Left lung (tissue), 14 donors: ENCODE measurements at regions of chr5 and their contacts with region 1.

Region 1: DNA sequence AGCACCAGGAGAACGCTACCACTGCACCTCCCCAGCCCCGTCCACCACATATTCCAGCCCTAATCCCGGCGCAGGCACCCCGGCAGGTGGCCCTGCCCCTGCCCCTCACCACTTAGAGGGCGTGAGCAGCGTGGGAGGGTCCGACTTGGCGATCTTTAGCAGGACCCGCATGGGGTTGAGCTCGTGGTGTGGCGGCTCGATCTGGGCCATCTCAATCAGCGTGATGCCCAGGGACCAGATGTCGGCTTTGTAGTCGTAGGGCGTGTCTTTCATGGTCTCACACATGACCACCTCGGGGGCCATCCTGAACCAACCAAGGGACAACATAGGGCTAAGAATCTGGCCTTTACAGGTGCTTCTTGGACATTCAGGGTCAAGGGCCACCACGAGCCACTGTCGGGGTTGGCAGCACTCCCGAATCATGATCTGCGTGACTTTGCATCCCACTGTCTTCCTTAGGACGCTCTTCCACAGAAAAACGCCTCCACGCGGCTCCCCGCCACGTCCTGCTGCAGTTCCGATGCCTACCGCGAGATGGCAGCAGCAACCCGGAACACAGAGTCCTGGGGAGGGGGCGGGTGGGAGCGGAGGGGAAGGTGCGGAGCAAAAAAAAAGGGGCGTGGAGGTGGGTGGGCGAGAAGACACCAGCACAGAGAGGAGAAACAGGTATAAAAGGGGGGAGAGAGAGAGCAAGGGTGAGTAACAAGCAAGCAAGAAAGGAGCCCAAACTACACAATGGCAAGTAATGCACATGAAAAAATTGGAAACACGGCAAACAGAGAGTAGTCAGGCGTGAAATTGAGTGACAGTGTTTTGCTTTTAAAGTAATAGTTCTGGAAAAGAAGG is 81.3 kb downstream of the STK10 start:
- DNase-seq: peak in 2 of 4 donors; percentile 72 to 87
- ATAC-seq: peak; percentile 59
- H3K4me3 ChIP-seq: no peak overlapping the region
- H3K27ac ChIP-seq: peak overlapping the region in 1 of 2 donors; percentile 13
- H3K4me1 ChIP-seq: peaks cover 7 to 76% of the 10 kb centered on the region in 2 donors
- H3K27me3 ChIP-seq: no peaks in the 10 kb centered on the region
- CTCF ChIP-seq: peak; percentile 93 to 95

Region 2: DNA sequence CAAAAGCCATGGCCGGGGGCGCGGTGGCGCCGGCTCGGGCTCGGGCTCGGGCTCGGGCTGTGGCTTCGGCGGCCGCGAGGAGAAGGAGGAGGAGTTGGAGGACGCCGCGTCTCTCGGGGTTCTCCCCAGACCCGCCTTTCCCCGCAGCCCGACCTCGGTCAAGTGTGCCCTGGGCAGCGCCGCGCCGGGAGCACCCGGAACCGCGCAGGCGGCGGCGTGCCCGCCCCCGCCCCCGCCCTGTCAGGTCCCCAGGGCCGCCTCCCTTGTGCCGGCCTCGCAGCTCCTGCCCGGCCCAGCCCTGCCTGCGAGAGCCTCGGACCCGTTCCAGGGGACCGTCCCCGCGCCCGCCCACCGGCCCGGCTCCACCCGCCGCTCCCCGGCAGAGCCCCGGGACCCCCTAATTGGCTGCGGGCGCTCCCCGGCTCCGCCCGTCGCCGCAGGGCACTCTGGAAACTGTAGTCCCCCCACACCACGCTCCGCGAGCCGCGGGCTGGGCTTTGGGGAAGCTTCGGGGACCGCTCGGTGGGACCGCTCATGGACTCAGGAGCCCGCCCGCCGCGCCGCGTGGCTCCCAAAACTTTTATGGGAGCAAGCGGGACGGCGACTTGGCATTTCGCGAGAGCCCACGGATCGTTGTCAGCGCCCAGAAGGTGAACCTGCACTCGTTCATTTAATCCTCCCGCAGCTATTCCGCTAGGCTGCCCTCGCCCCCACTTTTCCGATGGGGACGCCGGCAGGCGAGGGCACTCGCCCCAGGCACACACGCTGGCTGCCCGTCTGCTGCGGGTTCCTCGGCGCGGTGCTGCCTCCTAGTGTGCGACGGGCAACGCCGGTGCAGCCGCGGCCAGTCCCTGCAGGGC is 81.5 kb after region 1 on chr5 and contains the start of gene STK10:
- intact Hi-C with region 1: loop called (anchors 5 to 10 kb)
- DNase-seq: peak; percentile 87 to 99 (median 94)
- ATAC-seq: peak; percentile 92
- H3K4me3 ChIP-seq: peak within 1 kb of the TSS; percentile 87 to 96
- H3K27ac ChIP-seq: peak within 1 kb of the TSS; percentile 84 to 99
- H3K4me1 ChIP-seq: peaks cover 11 to 41% of the 10 kb centered on the region in 2 donors
- H3K27me3 ChIP-seq: no peaks in the 10 kb centered on the region
- CTCF ChIP-seq: peak; percentile 87 to 92
- polyA plus RNA-seq, gene STK10: 18.6 to 22.5 (median 21.4) TPM

Region 3: GRCh38 chr5:172293054-172293744 is 186.5 kb after region 1 on chr5:
- intact Hi-C with region 1: loop called in 1 of 2 experiments (anchors 10 kb)
- DNase-seq: peak in 3 of 4 donors; percentile 67 to 85 (median 74)
- ATAC-seq: peak; percentile 100
- H3K4me3 ChIP-seq: no peak overlapping the region
- H3K27ac ChIP-seq: no peak overlapping the region
- H3K4me1 ChIP-seq: peaks cover 2 to 8% of the 10 kb centered on the region in 2 donors
- H3K27me3 ChIP-seq: no peaks in the 10 kb centered on the region
- CTCF ChIP-seq: peak; percentile 73 to 88

Region 4: DNA sequence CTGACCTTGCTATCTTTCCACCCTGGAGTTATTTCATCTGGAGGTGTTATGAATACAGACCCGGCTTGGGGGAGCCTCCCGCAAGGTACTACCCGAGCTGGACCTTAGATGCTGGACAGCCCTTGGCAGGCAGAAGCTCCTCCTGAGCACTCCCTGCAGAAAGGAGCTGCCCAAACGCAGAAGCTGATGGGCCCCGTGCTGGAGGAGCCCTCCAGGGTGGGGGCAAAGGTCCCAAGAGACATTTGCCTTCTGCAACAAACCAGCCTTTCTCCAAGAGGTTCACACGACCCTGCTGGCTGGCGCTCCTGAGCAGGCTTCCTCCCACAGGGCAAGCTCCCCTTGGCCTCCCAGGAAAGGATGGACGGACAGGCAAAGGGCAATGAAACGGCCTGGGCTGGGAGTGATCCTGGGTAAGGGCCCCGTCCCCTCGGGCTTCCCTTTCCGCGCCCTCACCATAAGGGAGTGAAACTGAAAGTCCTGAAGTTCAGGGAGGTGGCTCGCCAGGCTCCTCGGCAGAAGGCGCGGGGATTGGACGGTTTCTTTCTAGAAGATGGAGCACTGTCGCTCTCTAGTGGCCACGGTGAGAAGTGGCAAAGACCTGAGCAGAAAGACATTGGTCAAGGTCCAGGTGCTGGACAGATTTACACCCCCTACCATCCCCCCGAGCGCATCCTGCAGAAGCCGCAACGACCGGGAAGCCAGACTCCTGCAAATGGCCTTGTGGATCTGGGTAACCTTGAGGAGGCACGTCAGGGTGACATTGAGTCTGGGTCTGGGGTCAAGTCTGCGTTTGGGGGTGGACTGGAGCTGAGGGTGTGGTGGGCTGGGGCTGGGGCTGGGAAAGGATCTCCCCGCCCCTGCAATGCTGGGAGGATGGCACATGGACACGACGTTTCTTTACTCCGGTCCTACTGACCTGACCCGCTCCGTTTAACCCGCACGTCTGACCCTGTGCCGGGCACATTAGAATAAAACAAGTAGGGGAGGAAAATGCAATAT is 590.7 kb after region 1 on chr5:
- intact Hi-C with region 1: no loop called
- DNase-seq: peak; percentile 86 to 93 (median 92)
- ATAC-seq: peak; percentile 90
- H3K4me3 ChIP-seq: peak overlapping the region; percentile 53 to 62
- H3K27ac ChIP-seq: peak overlapping the region; percentile 70 to 81
- H3K4me1 ChIP-seq: peaks cover 10 to 20% of the 10 kb centered on the region in 2 donors
- H3K27me3 ChIP-seq: peaks cover 0 to 12% of the 10 kb centered on the region in 2 donors
- CTCF ChIP-seq: peak; percentile 81 to 89